ENCODE measurements at regions of chr5 and their contacts with region 1.

Region 1: GRCh38 chr5:50711273-50711672 is 44.8 kb downstream of the PARP8 start:
- DNase-seq: peak; percentile 17 to 91 (median 57)
- ATAC-seq: peak; percentile 90
- H3K4me3 ChIP-seq: peak overlapping the region; percentile 25 to 37
- H3K4me3 Mint-ChIP-seq: peak overlapping the region; percentile 85
- H3K27ac ChIP-seq: peak overlapping the region; percentile 49 to 77
- H3K27ac Mint-ChIP-seq: peak overlapping the region; percentile 90
- H3K4me1 ChIP-seq: peaks cover 80% of the 10 kb centered on the region
- H3K4me1 Mint-ChIP-seq: peaks cover 81% of the 10 kb centered on the region
- H3K27me3 ChIP-seq: no peaks in the 10 kb centered on the region
- H3K27me3 Mint-ChIP-seq: no peaks in the 10 kb centered on the region
- CTCF ChIP-seq: no peak

Region 2: GRCh38 chr5:50697421-50698138 is 13.7 kb before region 1 on chr5:
- CTCF ChIA-PET with region 1: no interaction called
- POLR2A ChIA-PET with region 1: interaction called, 3 read pairs
- intact Hi-C with region 1: loop called in 1 of 2 experiments (anchors 2 kb)
- DNase-seq: no peak
- ATAC-seq: no peak
- H3K4me3 ChIP-seq: no peak overlapping the region
- H3K4me3 Mint-ChIP-seq: no peak overlapping the region
- H3K27ac ChIP-seq: no peak overlapping the region
- H3K27ac Mint-ChIP-seq: peak overlapping the region; percentile 29
- H3K4me1 ChIP-seq: peaks cover 25% of the 10 kb centered on the region
- H3K4me1 Mint-ChIP-seq: peaks cover 72% of the 10 kb centered on the region
- H3K27me3 ChIP-seq: no peaks in the 10 kb centered on the region
- H3K27me3 Mint-ChIP-seq: no peaks in the 10 kb centered on the region
- CTCF ChIP-seq: no peak

Region 3: GRCh38 chr5:50727149-50727496 is 15.8 kb after region 1 on chr5:
- CTCF ChIA-PET with region 1: interaction called, 5 read pairs
- POLR2A ChIA-PET with region 1: interaction called, 4 read pairs
- intact Hi-C with region 1: loop called in 1 of 2 experiments (anchors 1 kb)
- DNase-seq: peak in 3 of 9 experiments; percentile 20 to 45 (median 37)
- ATAC-seq: peak; percentile 75
- H3K4me3 ChIP-seq: no peak overlapping the region
- H3K4me3 Mint-ChIP-seq: peak overlapping the region; percentile 49
- H3K27ac ChIP-seq: peak overlapping the region in 1 of 2 experiments; percentile 47
- H3K27ac Mint-ChIP-seq: peak overlapping the region; percentile 87
- H3K4me1 ChIP-seq: peaks cover 40% of the 10 kb centered on the region
- H3K4me1 Mint-ChIP-seq: peaks cover 81% of the 10 kb centered on the region
- H3K27me3 ChIP-seq: no peaks in the 10 kb centered on the region
- H3K27me3 Mint-ChIP-seq: no peaks in the 10 kb centered on the region
- CTCF ChIP-seq: no peak

Region 4: GRCh38 chr5:50744776-50745175 is 33.5 kb after region 1 on chr5:
- CTCF ChIA-PET with region 1: interaction called, 3 read pairs
- POLR2A ChIA-PET with region 1: interaction called, 3 read pairs
- intact Hi-C with region 1: loop called in 1 of 2 experiments (anchors 5 kb)
- DNase-seq: peak in 2 of 9 experiments; percentile 36 to 61
- ATAC-seq: peak; percentile 65
- H3K4me3 ChIP-seq: peak overlapping the region; percentile 31 to 44
- H3K4me3 Mint-ChIP-seq: peak overlapping the region; percentile 81
- H3K27ac ChIP-seq: peak overlapping the region; percentile 17 to 71
- H3K27ac Mint-ChIP-seq: peak overlapping the region; percentile 91
- H3K4me1 ChIP-seq: peaks cover 61% of the 10 kb centered on the region
- H3K4me1 Mint-ChIP-seq: peaks cover 76% of the 10 kb centered on the region
- H3K27me3 ChIP-seq: no peaks in the 10 kb centered on the region
- H3K27me3 Mint-ChIP-seq: no peaks in the 10 kb centered on the region
- CTCF ChIP-seq: no peak

Region 5: DNA sequence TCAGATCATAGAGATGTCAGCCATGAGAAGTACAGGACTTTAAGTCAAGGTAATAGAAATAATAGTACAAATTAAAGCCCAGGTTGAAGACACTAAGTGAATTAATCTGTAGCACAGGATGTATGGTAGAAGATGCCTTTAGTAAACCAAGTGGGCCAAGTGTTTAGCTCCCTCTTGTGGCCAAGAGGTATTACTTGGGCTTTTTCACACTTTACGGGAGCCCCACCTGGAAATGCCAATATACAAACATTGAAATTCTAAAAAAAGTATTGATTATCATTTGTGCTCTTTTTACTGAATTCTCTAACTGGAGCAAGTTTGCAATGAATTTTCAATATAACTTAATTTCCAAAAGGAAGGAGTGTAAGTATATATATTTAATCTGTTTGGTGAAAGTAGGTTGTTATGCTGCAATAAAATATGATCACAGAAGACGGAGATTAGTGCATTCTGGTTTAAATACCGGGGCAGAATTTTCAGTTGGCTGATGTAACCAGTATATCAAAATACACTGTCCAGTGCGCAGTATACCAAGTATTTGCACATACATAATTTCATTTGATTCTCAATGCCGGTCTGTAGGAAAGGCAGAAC is 39.9 kb after region 1 on chr5:
- CTCF ChIA-PET with region 1: interaction called, 3 read pairs
- POLR2A ChIA-PET with region 1: interaction called, 3 read pairs
- intact Hi-C with region 1: loop called (anchors 2 to 5 kb)
- DNase-seq: peak in 7 of 9 experiments; percentile 11 to 86 (median 45)
- ATAC-seq: peak; percentile 88
- H3K4me3 ChIP-seq: no peak overlapping the region
- H3K4me3 Mint-ChIP-seq: peak overlapping the region; percentile 40
- H3K27ac ChIP-seq: peak overlapping the region in 1 of 2 experiments; percentile 57
- H3K27ac Mint-ChIP-seq: peak overlapping the region; percentile 73
- H3K4me1 ChIP-seq: peaks cover 44% of the 10 kb centered on the region
- H3K4me1 Mint-ChIP-seq: peaks cover 60% of the 10 kb centered on the region
- H3K27me3 ChIP-seq: no peaks in the 10 kb centered on the region
- H3K27me3 Mint-ChIP-seq: no peaks in the 10 kb centered on the region
- CTCF ChIP-seq: peak; percentile 90

Region 6: DNA sequence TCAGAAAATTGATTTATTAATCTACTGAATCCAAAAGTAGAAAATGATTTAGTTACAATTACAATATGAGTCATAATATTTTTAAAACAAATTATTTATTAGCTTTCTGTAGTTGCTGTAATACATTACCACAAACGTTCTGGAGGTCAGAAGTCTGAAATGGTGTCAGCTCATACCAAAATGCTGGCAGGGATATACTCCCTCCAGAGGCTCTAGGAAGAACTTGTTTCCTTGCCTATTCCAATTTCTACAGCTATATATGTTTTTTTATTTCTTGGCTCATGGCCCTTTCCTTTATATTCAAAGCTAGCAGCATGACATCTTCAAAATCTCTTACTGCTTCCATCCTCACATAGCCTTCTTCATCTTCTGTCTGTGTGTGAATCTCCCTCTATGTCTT is 1408.5 kb after region 1 on chr5:
- CTCF ChIA-PET with region 1: no interaction called
- POLR2A ChIA-PET with region 1: no interaction called
- intact Hi-C with region 1: no loop called
- DNase-seq: no peak
- ATAC-seq: no peak
- H3K4me3 ChIP-seq: no peak overlapping the region
- H3K4me3 Mint-ChIP-seq: no peak overlapping the region
- H3K27ac ChIP-seq: no peak overlapping the region
- H3K27ac Mint-ChIP-seq: no peak overlapping the region
- H3K4me1 ChIP-seq: no peaks in the 10 kb centered on the region
- H3K4me1 Mint-ChIP-seq: no peaks in the 10 kb centered on the region
- H3K27me3 ChIP-seq: no peaks in the 10 kb centered on the region
- H3K27me3 Mint-ChIP-seq: no peaks in the 10 kb centered on the region
- CTCF ChIP-seq: no peak